H1 (cell line): ENCODE measurements at regions of chr1 and their contacts with region 1.

Region 1: GRCh38 chr1:203340112-203340804 is 10.7 kb downstream of the FMOD start:
- DNase-seq: no peak
- H3K4me3 ChIP-seq: no peak overlapping the region
- H3K27ac ChIP-seq: 0 out of 2 replicates have a peak overlapping the region, but pooled peaks have one; percentile 13
- H3K4me1 ChIP-seq: peaks cover 2 to 4% (median 3%) of the 10 kb centered on the region in 4 experiments; a peak in 5 of 7 replicates
- H3K27me3 ChIP-seq: peaks cover 0 to 3% (median 0%) of the 10 kb centered on the region in 4 experiments; a peak in 2 of 7 replicates
- CTCF ChIP-seq: peak; percentile 78 to 96 (median 88)
- EP300 ChIP-seq: no peak
- POLR2A ChIP-seq: no peak
- RAD21 ChIP-seq: peak; percentile 95 to 96

Region 2: DNA sequence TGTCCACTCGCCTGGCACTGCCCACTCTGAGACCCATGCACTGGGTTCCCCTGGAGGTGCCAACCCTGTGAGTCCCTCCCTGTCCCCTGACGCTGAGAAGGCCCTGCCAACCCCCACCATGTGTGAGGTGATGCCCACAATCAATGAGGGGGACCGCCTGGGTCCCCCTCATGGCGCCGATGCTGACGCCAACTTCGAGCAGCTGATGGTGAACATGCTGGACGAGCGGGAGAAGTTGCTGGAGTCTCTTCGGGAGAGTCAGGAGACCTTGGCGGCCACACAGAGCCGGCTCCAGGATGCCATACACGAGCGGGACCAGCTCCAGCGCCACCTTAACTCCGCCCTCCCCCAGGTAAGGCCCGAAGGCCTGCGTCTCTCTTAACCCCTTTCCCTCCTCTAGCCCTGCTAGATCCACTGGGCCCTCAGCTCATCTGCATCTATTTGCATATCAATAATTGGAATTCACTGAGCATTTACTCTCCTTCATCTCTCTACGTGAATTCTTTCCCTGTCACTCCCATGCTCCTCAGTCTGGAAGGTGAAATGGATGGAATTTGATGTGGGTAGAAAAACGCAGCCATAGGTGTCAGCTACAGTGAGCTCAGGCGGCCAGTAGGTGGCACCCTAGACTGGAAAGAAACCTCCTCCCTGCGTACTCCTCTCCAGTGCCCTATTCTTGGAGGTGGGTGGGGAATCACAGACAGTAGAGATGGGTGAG is 301.2 kb before region 1 on chr1:
- CTCF ChIA-PET with region 1: interaction called, 12 read pairs
- POLR2A ChIA-PET with region 1: no interaction called
- DNase-seq: peak in 1 of 2 experiments; percentile 86
- H3K4me3 ChIP-seq: no peak overlapping the region
- H3K27ac ChIP-seq: no peak overlapping the region
- H3K4me1 ChIP-seq: peaks cover 2 to 15% (median 5%) of the 10 kb centered on the region in 4 experiments
- H3K27me3 ChIP-seq: no peaks in the 10 kb centered on the region
- CTCF ChIP-seq: peak; percentile 87 to 97 (median 88)
- EP300 ChIP-seq: no peak
- POLR2A ChIP-seq: no peak
- RAD21 ChIP-seq: peak; percentile 88 to 94

Region 3: GRCh38 chr1:203320591-203321272 is 19.5 kb before region 1 on chr1:
- CTCF ChIA-PET with region 1: interaction called, 66 read pairs
- POLR2A ChIA-PET with region 1: no interaction called
- DNase-seq: peak in 1 of 2 experiments; percentile 60
- H3K4me3 ChIP-seq: no peak overlapping the region
- H3K27ac ChIP-seq: no peak overlapping the region
- H3K4me1 ChIP-seq: peaks cover 3 to 17% (median 11%) of the 10 kb centered on the region in 4 experiments
- H3K27me3 ChIP-seq: peaks cover 0 to 49% (median 17%) of the 10 kb centered on the region in 4 experiments; a peak in 6 of 7 replicates
- CTCF ChIP-seq: peak in 1 of 3 experiments; percentile 8; a peak in 1 of 4 replicates
- EP300 ChIP-seq: no peak
- POLR2A ChIP-seq: no peak
- RAD21 ChIP-seq: 0 out of 4 replicates have a peak, but pooled peaks of 1 of the 2 experiments have one; percentile 17

Region 4: DNA sequence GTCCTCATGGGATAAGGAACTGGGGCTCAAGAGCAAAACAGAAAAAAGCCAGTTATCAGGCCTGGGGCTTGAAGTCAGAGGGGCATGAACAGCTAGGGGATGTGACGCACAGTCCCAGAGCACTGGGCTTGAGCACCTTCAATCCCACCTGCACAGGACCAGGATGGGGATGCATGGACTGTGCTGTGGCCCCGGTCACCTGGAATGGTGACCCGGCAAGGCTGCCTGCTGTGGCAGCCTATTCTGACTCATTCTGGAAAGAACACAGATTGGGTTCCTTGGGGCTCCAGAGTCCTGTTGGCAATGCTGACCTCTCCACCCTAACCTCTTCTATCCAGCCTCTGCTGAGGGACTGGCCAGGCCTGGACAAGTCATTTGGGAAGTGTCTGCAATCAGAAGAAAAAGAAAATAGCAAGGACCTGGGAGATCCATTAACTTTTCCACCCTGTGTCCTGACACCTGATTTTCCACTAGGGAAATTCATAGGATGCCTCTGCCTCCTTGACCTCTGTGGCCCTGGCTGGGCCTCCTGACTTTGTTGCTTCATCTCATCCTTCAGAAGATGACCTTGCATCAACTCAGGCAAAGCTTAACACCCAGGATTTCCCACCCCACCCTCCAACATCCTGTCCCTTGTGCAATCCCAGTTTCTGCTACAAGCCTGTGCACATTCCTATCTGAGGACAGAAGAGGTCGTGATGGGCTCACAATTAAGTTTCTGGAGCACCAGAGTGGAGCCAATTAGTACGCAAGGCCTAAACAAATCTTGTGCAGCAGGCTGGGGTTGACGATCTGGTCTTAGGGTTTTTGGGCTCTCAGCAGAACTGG is 28.6 kb after region 1 on chr1:
- CTCF ChIA-PET with region 1: interaction called, 253 read pairs
- POLR2A ChIA-PET with region 1: no interaction called
- DNase-seq: no peak
- H3K4me3 ChIP-seq: no peak overlapping the region
- H3K27ac ChIP-seq: no peak overlapping the region
- H3K4me1 ChIP-seq: no peaks in the 10 kb centered on the region
- H3K27me3 ChIP-seq: no peaks in the 10 kb centered on the region; a peak in 2 of 7 replicates
- CTCF ChIP-seq: peak in 2 of 3 experiments; percentile 10 to 11; a peak in 2 of 4 replicates
- EP300 ChIP-seq: no peak
- POLR2A ChIP-seq: no peak
- RAD21 ChIP-seq: peak; percentile 14 to 38; a peak in 3 of 4 replicates

Region 5: DNA sequence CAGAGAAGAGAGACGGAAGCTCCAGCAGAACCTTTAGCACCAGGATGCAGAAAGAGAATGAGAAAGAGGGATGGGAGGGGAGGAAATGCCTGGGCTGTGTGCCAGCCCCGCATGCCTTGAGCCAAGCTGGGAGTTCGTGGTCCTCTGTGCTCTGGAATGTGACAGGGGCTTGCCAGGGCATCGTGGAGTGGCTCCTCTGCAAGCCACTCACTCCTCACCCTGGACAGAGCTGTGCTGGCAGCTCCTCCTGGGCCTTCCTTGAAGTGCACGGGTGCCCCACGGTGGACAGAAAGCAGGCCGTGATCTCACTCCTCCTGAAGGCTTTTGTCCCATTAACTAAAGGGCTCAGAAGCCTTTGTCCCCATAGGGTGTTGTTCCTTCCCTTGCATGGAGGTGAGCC is 100.5 kb after region 1 on chr1:
- CTCF ChIA-PET with region 1: interaction called, 166 read pairs
- POLR2A ChIA-PET with region 1: no interaction called
- DNase-seq: no peak
- H3K4me3 ChIP-seq: no peak overlapping the region
- H3K27ac ChIP-seq: no peak overlapping the region
- H3K4me1 ChIP-seq: peaks cover 2 to 9% (median 5%) of the 10 kb centered on the region in 4 experiments
- H3K27me3 ChIP-seq: no peaks in the 10 kb centered on the region; a peak in 1 of 7 replicates
- CTCF ChIP-seq: peak; percentile 22 to 56 (median 53)
- EP300 ChIP-seq: no peak
- POLR2A ChIP-seq: no peak
- RAD21 ChIP-seq: peak; percentile 60 to 68

Region 6: GRCh38 chr1:203486618-203487370 is 146.5 kb after region 1 on chr1:
- CTCF ChIA-PET with region 1: interaction called, 330 read pairs
- POLR2A ChIA-PET with region 1: interaction called, 4 read pairs
- DNase-seq: no peak
- H3K4me3 ChIP-seq: peak overlapping the region; percentile 25 to 60 (median 38); a peak in 6 of 8 replicates
- H3K27ac ChIP-seq: peak overlapping the region; percentile 34; the same call in 1 of the 2 replicates
- H3K4me1 ChIP-seq: peaks cover 0 to 11% (median 5%) of the 10 kb centered on the region in 4 experiments; a peak in 6 of 7 replicates
- H3K27me3 ChIP-seq: no peaks in the 10 kb centered on the region
- CTCF ChIP-seq: no peak
- EP300 ChIP-seq: no peak
- POLR2A ChIP-seq: no peak
- RAD21 ChIP-seq: no peak

Region 7: DNA sequence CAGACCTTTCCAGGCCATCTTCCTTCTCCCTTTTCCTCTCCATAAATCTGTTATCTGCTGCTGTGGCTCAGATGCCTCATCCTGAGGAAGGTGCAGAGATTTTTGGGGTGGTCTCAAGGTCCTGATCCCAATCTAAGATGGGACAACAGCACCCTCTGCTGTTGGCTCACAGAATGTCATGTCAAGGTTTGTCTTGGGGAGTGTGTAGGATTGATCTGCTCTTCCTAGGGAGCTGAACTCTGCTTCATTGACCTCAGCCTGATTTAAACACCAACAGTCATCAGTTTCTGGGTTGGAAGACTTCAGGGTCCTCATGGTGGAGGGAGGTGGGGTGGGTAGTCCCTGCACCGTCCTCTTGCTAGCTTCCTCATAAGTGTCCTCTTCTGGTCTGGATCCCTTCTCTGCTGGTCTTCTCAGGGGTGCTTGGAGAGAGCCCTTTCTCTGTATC is 361.9 kb after region 1 on chr1:
- CTCF ChIA-PET with region 1: interaction called, 17 read pairs
- POLR2A ChIA-PET with region 1: no interaction called
- DNase-seq: peak; percentile 34 to 90
- H3K4me3 ChIP-seq: no peak overlapping the region
- H3K27ac ChIP-seq: no peak overlapping the region
- H3K4me1 ChIP-seq: no peaks in the 10 kb centered on the region
- H3K27me3 ChIP-seq: no peaks in the 10 kb centered on the region
- CTCF ChIP-seq: peak; percentile 40 to 94 (median 93)
- EP300 ChIP-seq: no peak
- POLR2A ChIP-seq: no peak
- RAD21 ChIP-seq: peak; percentile 99